Gastrocnemius medialis (tissue), 4 donors: ENCODE measurements at regions of chr19 and their contacts with region 1.

Region 1: GRCh38 chr19:18251587-18252369 is 22.5 kb downstream of the IQCN start:
- DNase-seq: peak; percentile 15 to 66
- ATAC-seq: peak; percentile 84 to 87
- H3K4me3 ChIP-seq: no peak overlapping the region
- H3K27ac ChIP-seq: no peak overlapping the region
- H3K4me1 ChIP-seq: no peaks in the 10 kb centered on the region
- H3K27me3 ChIP-seq: no peaks in the 10 kb centered on the region
- CTCF ChIP-seq: peak; percentile 94 to 98 (median 97)
- POLR2A ChIP-seq: no peak

Region 2: GRCh38 chr19:18117692-18118378 is 133.9 kb before region 1 on chr19:
- in situ Hi-C with region 1: loop called in 1 of 4 experiments (anchors 10 kb)
- intact Hi-C with region 1: loop called (anchors 2 kb)
- DNase-seq: peak; percentile 73 to 81
- ATAC-seq: peak; percentile 91
- H3K4me3 ChIP-seq: peak overlapping the region; percentile 59 to 97 (median 75)
- H3K27ac ChIP-seq: peak overlapping the region; percentile 51 to 71 (median 60)
- H3K4me1 ChIP-seq: peaks cover 10 to 12% of the 10 kb centered on the region in 2 donors
- H3K27me3 ChIP-seq: no peaks in the 10 kb centered on the region
- CTCF ChIP-seq: peak in 1 of 5 experiments; percentile 6
- POLR2A ChIP-seq: no peak

Region 3: DNA sequence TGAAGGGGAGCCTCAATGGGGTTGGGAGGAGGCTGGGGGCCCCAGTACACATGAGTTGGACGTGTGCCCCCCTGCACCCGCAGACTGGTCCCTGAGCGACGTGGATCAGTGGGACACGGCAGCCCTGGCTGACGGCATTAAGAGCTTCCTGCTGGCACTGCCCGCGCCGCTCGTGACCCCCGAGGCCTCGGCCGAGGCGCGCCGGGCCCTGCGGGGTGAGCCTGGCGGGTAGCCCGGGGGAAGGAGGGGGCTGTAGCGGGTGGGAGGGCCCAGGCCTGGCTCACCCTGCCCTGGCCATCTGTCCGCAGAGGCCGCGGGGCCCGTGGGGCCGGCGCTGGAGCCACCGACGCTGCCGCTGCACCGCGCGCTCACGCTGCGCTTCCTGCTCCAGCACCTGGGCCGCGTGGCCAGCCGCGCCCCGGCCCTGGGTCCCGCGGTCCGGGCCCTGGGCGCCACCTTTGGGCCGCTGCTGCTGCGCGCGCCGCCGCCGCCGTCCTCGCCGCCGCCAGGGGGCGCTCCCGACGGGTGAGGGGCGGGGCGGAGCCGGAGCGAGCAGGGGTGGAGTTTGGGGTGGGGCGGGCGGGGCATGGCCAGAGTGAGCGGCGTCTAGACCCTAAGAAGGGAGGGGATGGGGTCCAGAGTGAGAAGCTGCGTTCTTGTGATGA is 90.7 kb before region 1 on chr19:
- in situ Hi-C with region 1: no loop called
- intact Hi-C with region 1: loop called (anchors 2 kb)
- DNase-seq: peak in 1 of 2 donors; percentile 55
- ATAC-seq: peak; percentile 77 to 85
- H3K4me3 ChIP-seq: peak overlapping the region; percentile 40 to 53 (median 46)
- H3K27ac ChIP-seq: peak overlapping the region; percentile 76 to 88 (median 82)
- H3K4me1 ChIP-seq: peaks cover 17 to 37% of the 10 kb centered on the region in 2 donors
- H3K27me3 ChIP-seq: no peaks in the 10 kb centered on the region
- CTCF ChIP-seq: peak; percentile 61 to 97 (median 76)
- POLR2A ChIP-seq: no peak

Region 4: GRCh38 chr19:18192673-18193387 is 58.9 kb before region 1 on chr19 and contains the start of gene MPV17L2:
- in situ Hi-C with region 1: no loop called
- intact Hi-C with region 1: loop called (anchors 1 kb)
- DNase-seq: peak; percentile 100
- ATAC-seq: peak; percentile 96 to 97
- H3K4me3 ChIP-seq: peak within 1 kb of the TSS; percentile 75 to 89 (median 82)
- H3K27ac ChIP-seq: peak within 1 kb of the TSS; percentile 88 to 95 (median 94)
- H3K4me1 ChIP-seq: peaks cover 11 to 14% of the 10 kb centered on the region in 2 donors
- H3K27me3 ChIP-seq: no peaks in the 10 kb centered on the region
- CTCF ChIP-seq: no peak
- POLR2A ChIP-seq: peak; percentile 81 to 83
- total RNA-seq, gene MPV17L2: 18.1 to 38.9 (median 33.0) TPM

Region 5: GRCh38 chr19:18214779-18215433 is 36.9 kb before region 1 on chr19:
- in situ Hi-C with region 1: loop called in 1 of 4 experiments (anchors 5 kb)
- intact Hi-C with region 1: no loop called
- DNase-seq: no peak
- ATAC-seq: no peak
- H3K4me3 ChIP-seq: no peak overlapping the region
- H3K27ac ChIP-seq: no peak overlapping the region
- H3K4me1 ChIP-seq: no peaks in the 10 kb centered on the region
- H3K27me3 ChIP-seq: no peaks in the 10 kb centered on the region
- CTCF ChIP-seq: no peak
- POLR2A ChIP-seq: no peak

Region 6: DNA sequence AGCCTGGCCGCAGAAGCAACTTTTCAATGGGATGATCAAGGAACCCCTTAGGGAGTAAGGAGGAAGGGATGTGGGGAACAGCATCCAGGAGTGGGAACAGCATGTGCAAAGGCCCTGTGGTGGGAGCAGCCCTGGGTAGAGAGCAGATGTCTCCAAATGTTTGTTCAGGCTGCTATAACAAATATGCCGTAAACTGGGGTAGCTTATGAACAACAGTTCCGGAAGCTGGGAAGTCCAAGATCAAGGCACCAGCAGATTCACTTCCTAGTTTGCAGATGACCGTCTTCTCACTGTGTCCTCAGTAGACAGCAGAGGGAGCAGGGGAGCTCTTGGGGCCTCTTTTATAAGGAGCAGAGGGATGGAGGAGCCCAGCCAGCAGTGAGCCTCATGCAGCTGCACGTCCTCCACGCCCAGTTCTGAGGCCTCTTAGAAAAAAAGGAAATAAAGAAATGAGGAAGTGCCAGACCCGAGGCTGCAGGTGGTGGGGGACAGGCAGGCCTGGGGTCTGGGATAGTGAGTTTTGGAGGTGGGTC is 149.9 kb after region 1 on chr19:
- in situ Hi-C with region 1: loop called in 2 of 4 experiments (anchors 25 kb)
- intact Hi-C with region 1: loop called (anchors 10 kb)
- DNase-seq: peak; percentile 63 to 68
- ATAC-seq: peak; percentile 55 to 76
- H3K4me3 ChIP-seq: no peak overlapping the region
- H3K27ac ChIP-seq: no peak overlapping the region
- H3K4me1 ChIP-seq: peaks cover 0 to 3% of the 10 kb centered on the region in 2 donors
- H3K27me3 ChIP-seq: no peaks in the 10 kb centered on the region
- CTCF ChIP-seq: peak in 1 of 5 experiments; percentile 21
- POLR2A ChIP-seq: no peak

Region 7: GRCh38 chr19:18419195-18419698 is 167.5 kb after region 1 on chr19 and contains the start of gene SSBP4:
- in situ Hi-C with region 1: loop called in 2 of 4 experiments (anchors 25 kb)
- intact Hi-C with region 1: no loop called
- DNase-seq: peak in 1 of 2 donors; percentile 59
- ATAC-seq: peak; percentile 60 to 64
- H3K4me3 ChIP-seq: peak within 1 kb of the TSS; percentile 57 to 69 (median 62)
- H3K27ac ChIP-seq: peak within 1 kb of the TSS; percentile 83 to 92 (median 84)
- H3K4me1 ChIP-seq: peaks cover 18 to 62% of the 10 kb centered on the region in 2 donors
- H3K27me3 ChIP-seq: peaks cover 20 to 26% (median 21%) of the 10 kb centered on the region in 3 donors
- CTCF ChIP-seq: peak in 4 of 5 experiments; percentile 57 to 67 (median 59)
- POLR2A ChIP-seq: peak; percentile 59 to 60
- total RNA-seq, gene SSBP4: 24.7 to 65.2 (median 44.1) TPM

Region 8: GRCh38 chr19:18450931-18451845 is 199.4 kb after region 1 on chr19:
- in situ Hi-C with region 1: no loop called
- intact Hi-C with region 1: no loop called
- DNase-seq: peak; percentile 56 to 80
- ATAC-seq: peak; percentile 73 to 83
- H3K4me3 ChIP-seq: no peak overlapping the region
- H3K27ac ChIP-seq: peak overlapping the region in 3 of 4 donors; percentile 18 to 28 (median 20)
- H3K4me1 ChIP-seq: peaks cover 6 to 16% of the 10 kb centered on the region in 2 donors
- H3K27me3 ChIP-seq: no peaks in the 10 kb centered on the region
- CTCF ChIP-seq: peak; percentile 97 to 99 (median 98)
- POLR2A ChIP-seq: no peak